Naive thymus-derived CD4-positive, alpha-beta T cell (primary cell): ENCODE measurements at regions of chr1 and their contacts with region 1.

Region 1: GRCh38 chr1:39901698-39902459 is at the start of gene MYCL:
- DNase-seq: peak; percentile 34 to 72 (median 59)
- ATAC-seq: peak; percentile 87
- H3K4me3 ChIP-seq: peak within 1 kb of the TSS; percentile 66
- H3K4me3 Mint-ChIP-seq: peak within 1 kb of the TSS; percentile 68 to 82 (median 78)
- H3K27ac ChIP-seq: no peak within 1 kb of the TSS
- H3K27ac Mint-ChIP-seq: no peak within 1 kb of the TSS
- H3K4me1 ChIP-seq: peaks cover 0 to 8% of the 10 kb centered on the region in 2 donors
- H3K4me1 Mint-ChIP-seq: peaks cover 0 to 10% (median 7%) of the 10 kb centered on the region in 7 donors
- H3K27me3 ChIP-seq: peaks cover 0 to 5% of the 10 kb centered on the region in 2 donors
- H3K27me3 Mint-ChIP-seq: peaks cover 49 to 71% (median 52%) of the 10 kb centered on the region in 5 donors
- total RNA-seq, gene MYCL: 0.30 to 8.1 (median 0.83) TPM in 4 of 5 experiments, not detected in the other

Region 2: DNA sequence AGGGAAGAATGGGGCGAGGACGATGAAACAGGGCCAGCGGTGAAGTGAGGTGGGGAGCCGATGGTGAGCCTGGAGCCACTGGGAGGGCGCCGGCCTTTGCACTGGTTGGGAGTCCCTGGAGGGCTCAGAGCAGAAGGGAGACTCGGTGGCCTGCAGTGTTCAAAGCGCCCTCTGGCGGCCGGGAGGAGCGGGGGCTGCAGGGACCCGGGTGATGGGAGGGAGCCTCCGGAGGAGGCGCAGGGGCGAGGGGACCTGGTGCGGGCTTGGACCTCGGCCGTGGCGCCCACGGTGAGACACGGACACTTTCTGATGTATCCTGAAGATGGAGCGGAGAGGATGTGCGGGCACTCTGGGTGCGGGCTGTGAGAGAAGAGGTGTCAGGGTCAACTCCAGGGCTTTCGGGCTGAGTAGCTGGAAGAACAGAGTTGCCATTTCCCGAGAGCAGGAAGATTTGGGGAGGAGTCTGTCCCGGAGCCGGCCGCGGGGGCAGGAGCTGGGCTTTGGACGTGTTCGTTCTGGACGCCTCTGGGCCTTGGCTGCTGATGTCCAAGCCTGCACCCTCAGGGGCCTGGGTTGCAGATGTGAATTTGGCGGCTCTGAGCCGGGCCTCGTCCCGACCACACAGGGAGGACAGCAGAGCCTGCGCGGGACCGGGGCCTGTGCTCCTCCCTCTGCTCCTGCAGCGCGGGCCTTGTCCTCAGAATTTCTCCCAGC is 292.1 kb before region 1 on chr1:
- CTCF ChIA-PET with region 1: interaction called, 5 read pairs
- POLR2A ChIA-PET with region 1: no interaction called
- intact Hi-C with region 1: loop called in 1 of 2 experiments (anchors 1 kb)
- DNase-seq: peak; percentile 10 to 84 (median 66)
- ATAC-seq: peak; percentile 89
- H3K4me3 ChIP-seq: no peak overlapping the region
- H3K4me3 Mint-ChIP-seq: peak overlapping the region in 2 of 10 donors; percentile 51 to 59
- H3K27ac ChIP-seq: no peak overlapping the region
- H3K27ac Mint-ChIP-seq: no peak overlapping the region
- H3K4me1 ChIP-seq: no peaks in the 10 kb centered on the region
- H3K4me1 Mint-ChIP-seq: peaks cover 0 to 9% (median 8%) of the 10 kb centered on the region in 7 donors
- H3K27me3 ChIP-seq: no peaks in the 10 kb centered on the region
- H3K27me3 Mint-ChIP-seq: peaks cover 0 to 4% (median 0%) of the 10 kb centered on the region in 5 donors

Region 3: GRCh38 chr1:39816415-39817090 is 85.3 kb before region 1 on chr1:
- CTCF ChIA-PET with region 1: interaction called, 67 read pairs
- POLR2A ChIA-PET with region 1: interaction called, 11 read pairs
- intact Hi-C with region 1: loop called (anchors 1 kb)
- DNase-seq: peak; percentile 16 to 73 (median 41)
- ATAC-seq: peak; percentile 84
- H3K4me3 ChIP-seq: peak overlapping the region; percentile 31
- H3K4me3 Mint-ChIP-seq: peak overlapping the region; percentile 35 to 94 (median 85)
- H3K27ac ChIP-seq: no peak overlapping the region
- H3K27ac Mint-ChIP-seq: peak overlapping the region in 4 of 9 donors; percentile 43 to 85 (median 70)
- H3K4me1 ChIP-seq: no peaks in the 10 kb centered on the region
- H3K4me1 Mint-ChIP-seq: peaks cover 6 to 15% (median 8%) of the 10 kb centered on the region in 7 donors
- H3K27me3 ChIP-seq: peaks cover 0 to 2% of the 10 kb centered on the region in 2 donors
- H3K27me3 Mint-ChIP-seq: peaks cover 0 to 28% (median 4%) of the 10 kb centered on the region in 5 donors

Region 4: DNA sequence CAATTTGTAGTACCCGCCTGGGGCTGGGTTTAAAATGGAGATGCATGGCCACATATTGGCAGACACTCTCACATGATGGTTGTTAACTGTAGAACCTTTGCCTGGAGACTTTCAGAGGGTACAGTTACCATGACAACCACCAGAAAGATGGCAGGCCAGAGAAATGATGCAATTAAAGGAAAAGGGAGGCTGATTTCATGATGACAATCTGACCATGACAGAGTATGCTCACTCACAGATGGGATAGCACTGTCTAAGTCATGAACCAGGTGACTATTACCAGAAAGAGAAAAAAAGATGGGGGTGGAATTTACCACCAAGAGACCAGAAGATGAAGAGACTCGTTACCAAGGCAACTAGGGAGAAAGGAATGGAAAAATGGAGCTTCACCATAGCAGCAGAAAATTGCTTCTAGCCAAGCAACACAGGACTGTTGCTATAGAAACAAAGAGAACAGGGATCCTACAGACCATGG is 15.1 kb before region 1 on chr1:
- CTCF ChIA-PET with region 1: interaction called, 4 read pairs
- POLR2A ChIA-PET with region 1: no interaction called
- intact Hi-C with region 1: loop called (anchors 1 kb)
- DNase-seq: no peak
- ATAC-seq: no peak
- H3K4me3 ChIP-seq: no peak overlapping the region
- H3K4me3 Mint-ChIP-seq: no peak overlapping the region
- H3K27ac ChIP-seq: no peak overlapping the region
- H3K27ac Mint-ChIP-seq: no peak overlapping the region
- H3K4me1 ChIP-seq: peaks cover 9 to 11% of the 10 kb centered on the region in 2 donors
- H3K4me1 Mint-ChIP-seq: peaks cover 11 to 22% (median 15%) of the 10 kb centered on the region in 7 donors
- H3K27me3 ChIP-seq: no peaks in the 10 kb centered on the region
- H3K27me3 Mint-ChIP-seq: peaks cover under 1 to 12% (median 6%) of the 10 kb centered on the region in 5 donors

Region 5: DNA sequence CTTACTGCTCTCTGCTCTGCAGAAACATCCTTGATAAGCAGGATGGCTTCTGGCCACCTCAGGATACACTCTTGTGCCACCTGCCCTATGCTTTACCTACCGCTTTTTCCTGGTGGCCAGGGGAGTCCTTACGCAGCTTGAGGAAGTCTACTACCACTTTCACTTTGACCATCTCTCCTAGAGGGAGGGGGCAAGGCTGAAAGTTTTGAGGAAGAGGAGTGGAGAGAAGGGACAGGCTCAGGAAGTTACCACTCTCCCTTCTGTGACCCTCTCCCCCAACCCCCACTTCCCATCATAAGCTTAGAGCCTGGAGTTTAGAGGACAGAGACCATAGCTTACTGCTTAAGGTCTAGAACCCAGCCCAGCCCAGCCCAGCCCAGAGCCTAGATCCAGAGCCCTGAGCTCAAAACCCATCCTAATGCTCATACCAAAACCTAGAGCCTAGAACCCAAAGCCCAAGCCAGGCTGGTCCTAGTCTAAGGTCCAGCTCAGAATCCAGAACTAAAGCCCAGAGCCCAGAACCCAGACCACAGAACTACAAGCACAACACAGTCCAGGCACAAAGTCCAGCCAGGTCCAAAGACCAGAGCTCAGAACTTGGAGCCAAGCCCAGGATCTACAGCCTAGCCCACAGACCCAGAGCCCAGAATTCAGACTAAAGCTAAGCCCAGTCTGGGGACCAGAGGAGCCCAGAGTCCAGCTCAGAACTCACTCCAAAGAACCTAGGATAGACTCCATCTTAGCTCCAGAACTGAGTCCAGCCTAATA is 35.0 kb after region 1 on chr1:
- CTCF ChIA-PET with region 1: no interaction called
- POLR2A ChIA-PET with region 1: no interaction called
- intact Hi-C with region 1: no loop called
- DNase-seq: no peak
- ATAC-seq: peak; percentile 65
- H3K4me3 ChIP-seq: no peak overlapping the region
- H3K4me3 Mint-ChIP-seq: no peak overlapping the region
- H3K27ac ChIP-seq: no peak overlapping the region
- H3K27ac Mint-ChIP-seq: no peak overlapping the region
- H3K4me1 ChIP-seq: no peaks in the 10 kb centered on the region
- H3K4me1 Mint-ChIP-seq: peaks cover 0 to 9% (median 0%) of the 10 kb centered on the region in 7 donors
- H3K27me3 ChIP-seq: no peaks in the 10 kb centered on the region
- H3K27me3 Mint-ChIP-seq: peaks cover 0 to 7% (median under 1%) of the 10 kb centered on the region in 5 donors

Region 6: GRCh38 chr1:40032240-40032891 is 130.5 kb after region 1 on chr1:
- CTCF ChIA-PET with region 1: interaction called, 3 read pairs
- POLR2A ChIA-PET with region 1: no interaction called
- intact Hi-C with region 1: loop called in 1 of 2 experiments (anchors 5 kb)
- DNase-seq: peak in 7 of 9 donors; percentile 21 to 55 (median 47)
- ATAC-seq: peak; percentile 79
- H3K4me3 ChIP-seq: no peak overlapping the region
- H3K4me3 Mint-ChIP-seq: peak overlapping the region in 4 of 10 donors; percentile 1 to 49 (median 5)
- H3K27ac ChIP-seq: no peak overlapping the region
- H3K27ac Mint-ChIP-seq: peak overlapping the region in 7 of 9 donors; percentile 38 to 72 (median 53)
- H3K4me1 ChIP-seq: peaks cover 25 to 43% of the 10 kb centered on the region in 2 donors
- H3K4me1 Mint-ChIP-seq: peaks cover 28 to 76% (median 56%) of the 10 kb centered on the region in 7 donors
- H3K27me3 ChIP-seq: no peaks in the 10 kb centered on the region
- H3K27me3 Mint-ChIP-seq: peaks cover 0 to 16% (median 0%) of the 10 kb centered on the region in 5 donors